HEK293 (cell line): ENCODE measurements at regions of chr9 and their contacts with region 1.

Region 1: GRCh38 chr9:4048441-4048840 is 251.4 kb downstream of the GLIS3 start:
- H3K4me3 ChIP-seq: no peak overlapping the region
- H3K27ac ChIP-seq: no peak overlapping the region
- H3K4me1 ChIP-seq: no peaks in the 10 kb centered on the region
- CTCF ChIP-seq: no peak

Region 2: DNA sequence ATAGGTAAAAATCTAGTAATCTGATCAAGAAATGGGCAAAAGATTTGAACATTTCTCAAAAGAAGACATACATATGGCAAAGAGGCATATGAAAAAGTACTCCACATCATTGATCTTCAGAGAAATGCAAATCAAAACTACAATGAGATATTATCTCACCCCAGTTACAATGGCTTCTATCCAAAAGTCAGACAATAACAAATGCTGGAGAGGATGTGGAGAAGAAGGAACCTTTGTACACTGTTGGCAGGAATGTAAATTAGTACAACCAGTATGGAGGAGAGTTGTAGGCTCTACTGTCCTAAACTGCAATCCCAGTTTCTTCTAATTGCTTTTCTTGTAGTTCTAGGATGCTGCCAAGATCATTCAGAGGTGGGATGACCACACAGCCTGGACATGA is 329.2 kb before region 1 on chr9:
- CTCF ChIA-PET with region 1: no interaction called
- POLR2A ChIA-PET with region 1: no interaction called
- H3K4me3 ChIP-seq: no peak overlapping the region
- H3K27ac ChIP-seq: no peak overlapping the region
- H3K4me1 ChIP-seq: no peaks in the 10 kb centered on the region
- CTCF ChIP-seq: no peak

Region 3: GRCh38 chr9:4069457-4070153 is 21.2 kb after region 1 on chr9:
- CTCF ChIA-PET with region 1: interaction called, 10 read pairs
- POLR2A ChIA-PET with region 1: no interaction called
- H3K4me3 ChIP-seq: no peak overlapping the region
- H3K27ac ChIP-seq: no peak overlapping the region
- H3K4me1 ChIP-seq: peaks cover 2% of the 10 kb centered on the region; the same call in 1 of the 2 replicates
- CTCF ChIP-seq: no peak

Region 4: GRCh38 chr9:4297151-4297785 is 248.8 kb after region 1 on chr9:
- CTCF ChIA-PET with region 1: no interaction called
- POLR2A ChIA-PET with region 1: interaction called, 10 read pairs
- H3K4me3 ChIP-seq: peak overlapping the region; percentile 73
- H3K27ac ChIP-seq: peak overlapping the region; percentile 92
- H3K4me1 ChIP-seq: peaks cover 11% of the 10 kb centered on the region; the same call in 1 of the 2 replicates
- CTCF ChIP-seq: peak; percentile 66